ENCODE measurements at regions of chr7 and their contacts with region 1.

Region 1: DNA sequence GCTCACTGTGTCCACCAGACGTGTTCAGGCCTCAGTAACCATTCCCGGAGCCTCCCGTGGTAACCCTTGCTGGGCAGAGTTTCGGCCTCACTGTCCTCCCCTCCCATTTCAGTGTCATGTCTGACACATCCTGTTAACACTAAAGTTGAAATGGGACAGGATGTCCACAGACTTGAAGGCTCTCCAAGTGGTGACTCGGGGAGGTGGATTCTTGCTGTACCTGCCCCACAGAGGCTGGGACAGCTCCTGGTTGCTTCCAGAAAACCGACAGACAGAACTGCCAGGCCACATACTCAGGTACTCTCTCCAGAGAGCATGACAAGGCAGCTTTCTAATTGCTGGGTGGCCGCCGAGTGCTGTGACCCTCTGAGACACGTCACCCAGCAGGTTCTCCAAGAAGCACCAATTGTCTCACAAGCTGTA is 17.9 kb upstream of the CYTH3 start:
- H3K4me3 ChIP-seq: no peak overlapping the region
- H3K27ac ChIP-seq: no peak overlapping the region
- H3K4me1 ChIP-seq: no peaks in the 10 kb centered on the region
- CTCF ChIP-seq: no peak

Region 2: DNA sequence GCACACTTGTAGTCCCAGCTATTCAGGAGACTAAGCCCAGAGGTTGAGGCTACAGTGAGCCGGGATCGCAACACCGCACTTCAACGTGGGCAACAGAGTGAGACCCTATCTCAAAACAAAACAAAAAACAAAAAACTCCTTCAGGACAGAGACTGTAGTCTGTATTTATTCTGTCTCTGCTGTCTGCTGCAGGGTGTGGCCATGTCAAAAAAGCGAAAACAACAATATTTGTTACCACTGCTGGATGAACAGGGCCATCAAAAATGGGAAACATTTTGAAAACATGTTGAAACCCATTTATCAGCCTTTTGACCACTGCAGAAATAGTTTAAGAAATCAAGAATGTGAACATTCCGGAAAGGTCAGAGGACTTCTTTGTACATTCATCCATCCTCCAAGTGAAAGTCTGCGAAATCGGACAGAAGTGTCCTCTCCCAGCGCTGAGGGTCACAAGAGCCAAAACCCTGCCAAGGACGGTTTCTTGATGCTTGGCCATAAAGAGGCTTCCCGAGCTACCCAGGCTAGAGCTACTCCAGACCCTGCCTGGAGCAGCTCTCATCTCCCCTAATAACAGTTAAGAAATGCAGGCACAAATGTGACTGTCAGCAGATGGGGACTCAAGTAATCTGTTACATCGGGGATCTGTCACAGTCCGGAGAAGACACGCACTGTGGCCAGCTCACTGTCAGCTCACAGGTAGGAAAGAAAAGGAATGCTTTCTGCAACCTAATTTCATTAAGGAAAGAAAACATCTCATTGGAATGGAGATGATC is 13.5 kb before region 1 on chr7:
- CTCF ChIA-PET with region 1: no interaction called
- POLR2A ChIA-PET with region 1: no interaction called
- H3K4me3 ChIP-seq: no peak overlapping the region
- H3K27ac ChIP-seq: no peak overlapping the region
- H3K4me1 ChIP-seq: peaks cover 5% of the 10 kb centered on the region
- CTCF ChIP-seq: no peak

Region 3: GRCh38 chr7:6305317-6305716 is 15.0 kb after region 1 on chr7:
- CTCF ChIA-PET with region 1: interaction called, 10 read pairs
- POLR2A ChIA-PET with region 1: no interaction called
- H3K4me3 ChIP-seq: no peak overlapping the region
- H3K27ac ChIP-seq: no peak overlapping the region
- H3K4me1 ChIP-seq: no peaks in the 10 kb centered on the region
- CTCF ChIP-seq: no peak

Region 4: GRCh38 chr7:6323967-6324701 is 33.8 kb after region 1 on chr7:
- CTCF ChIA-PET with region 1: no interaction called
- POLR2A ChIA-PET with region 1: no interaction called
- H3K4me3 ChIP-seq: no peak overlapping the region
- H3K27ac ChIP-seq: no peak overlapping the region
- H3K4me1 ChIP-seq: no peaks in the 10 kb centered on the region
- CTCF ChIP-seq: no peak

Measured in HEK293 (cell line).